Activated CD8-positive, alpha-beta T cell treated with anti-CD3 and anti-CD28 coated beads for 36 hours (primary cell): ENCODE measurements at regions of chr9 and their contacts with region 1.

Region 1: GRCh38 chr9:34646211-34647083 is at the start of gene GALT:
- DNase-seq: peak; percentile 98
- ATAC-seq: peak; percentile 90
- H3K4me3 Mint-ChIP-seq: peak within 1 kb of the TSS; percentile 80
- H3K27ac Mint-ChIP-seq: peak within 1 kb of the TSS; percentile 85
- H3K4me1 Mint-ChIP-seq: peaks cover 22% of the 10 kb centered on the region
- H3K27me3 Mint-ChIP-seq: no peaks in the 10 kb centered on the region
- CTCF ChIP-seq: peak; percentile 61
- total RNA-seq, gene GALT: 42.8 to 44.5 TPM

Region 2: DNA sequence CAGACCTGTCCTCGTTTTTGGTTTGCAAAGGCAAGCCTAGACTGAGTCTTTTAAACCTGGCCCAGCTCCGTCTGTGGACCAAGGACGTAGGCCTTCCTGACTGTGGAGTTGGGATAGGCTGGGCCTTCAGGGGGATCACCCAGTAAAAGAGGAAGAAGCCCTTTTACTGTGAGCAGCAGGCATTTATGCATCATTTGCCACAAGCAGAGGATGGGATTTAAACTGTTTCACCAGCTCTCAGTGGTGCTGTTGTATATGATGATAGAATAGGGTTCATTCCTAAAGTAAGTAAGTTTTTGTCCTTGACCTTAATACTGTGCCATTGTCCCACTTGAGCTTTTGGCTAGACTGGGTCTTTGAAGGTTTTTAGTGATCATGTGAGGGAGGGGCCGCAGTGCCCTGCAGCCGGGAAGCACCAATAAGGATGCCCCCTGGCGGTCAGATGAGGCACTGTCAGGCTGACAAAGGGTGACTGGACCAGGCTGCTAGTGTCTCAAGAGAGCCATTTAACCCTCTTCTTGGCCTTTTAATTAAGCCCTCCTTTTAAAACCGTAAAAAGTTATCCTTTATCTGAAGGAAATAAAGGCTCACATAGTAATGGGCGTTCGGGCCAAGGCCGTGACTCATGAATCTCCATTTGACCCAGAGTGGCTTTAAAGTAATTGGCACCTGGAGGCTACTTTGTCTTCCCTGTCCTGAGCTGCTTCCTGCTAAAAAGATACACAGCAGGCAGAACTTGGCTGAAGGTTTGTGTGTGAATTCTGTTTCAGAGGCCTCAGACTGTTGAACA is 393.6 kb before region 1 on chr9:
- CTCF ChIA-PET with region 1: no interaction called
- POLR2A ChIA-PET with region 1: no interaction called
- intact Hi-C with region 1: no loop called
- DNase-seq: peak; percentile 79
- ATAC-seq: peak; percentile 85
- H3K4me3 Mint-ChIP-seq: no peak overlapping the region
- H3K27ac Mint-ChIP-seq: no peak overlapping the region
- H3K4me1 Mint-ChIP-seq: peaks cover 12% of the 10 kb centered on the region
- H3K27me3 Mint-ChIP-seq: no peaks in the 10 kb centered on the region
- CTCF ChIP-seq: peak; percentile 95

Region 3: DNA sequence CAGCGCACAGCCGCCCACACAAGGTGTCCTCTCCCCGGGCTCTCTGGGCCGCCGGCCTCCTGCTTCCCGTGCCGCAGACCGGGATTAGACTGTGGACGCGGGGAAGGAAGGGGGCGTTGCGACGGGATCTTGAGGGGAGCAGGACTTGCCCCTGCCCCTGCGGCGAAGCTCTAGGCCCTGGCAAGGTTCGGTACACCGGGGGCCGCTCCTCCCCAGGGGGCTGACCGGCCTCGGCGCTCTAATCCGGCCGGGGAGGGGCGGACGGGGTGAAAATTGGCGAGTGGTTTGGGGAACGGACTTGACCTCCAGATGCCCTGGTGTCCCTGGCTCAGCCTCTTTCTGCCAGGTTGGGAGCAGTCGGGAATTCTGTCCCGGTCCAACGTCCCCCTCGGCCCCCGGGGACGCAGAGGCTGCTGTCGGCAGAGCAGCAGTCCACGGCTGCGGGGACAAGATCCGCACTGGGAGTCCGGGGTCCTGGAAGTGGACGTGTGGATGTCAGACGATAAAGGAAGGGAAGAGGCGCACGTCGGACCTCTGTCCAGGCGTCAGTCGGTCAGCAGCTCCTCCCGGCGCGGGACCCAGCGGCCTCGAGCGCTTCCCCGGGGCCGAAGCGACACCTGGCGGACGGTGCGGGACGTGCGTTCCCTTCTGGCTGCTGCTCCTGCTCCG is 55.1 kb before region 1 on chr9:
- CTCF ChIA-PET with region 1: no interaction called
- POLR2A ChIA-PET with region 1: no interaction called
- intact Hi-C with region 1: no loop called
- DNase-seq: peak; percentile 84
- ATAC-seq: peak; percentile 85
- H3K4me3 Mint-ChIP-seq: peak overlapping the region; percentile 53
- H3K27ac Mint-ChIP-seq: no peak overlapping the region
- H3K4me1 Mint-ChIP-seq: peaks cover 23% of the 10 kb centered on the region
- H3K27me3 Mint-ChIP-seq: peaks cover 57% of the 10 kb centered on the region
- CTCF ChIP-seq: peak; percentile 97

Region 4: GRCh38 chr9:34620061-34620994 is 26.1 kb before region 1 on chr9 and contains the start of gene DCTN3:
- CTCF ChIA-PET with region 1: interaction called, 5 read pairs
- POLR2A ChIA-PET with region 1: interaction called, 11 read pairs
- intact Hi-C with region 1: no loop called
- DNase-seq: peak; percentile 97
- ATAC-seq: peak; percentile 99
- H3K4me3 Mint-ChIP-seq: peak within 1 kb of the TSS; percentile 91
- H3K27ac Mint-ChIP-seq: peak within 1 kb of the TSS; percentile 75
- H3K4me1 Mint-ChIP-seq: peaks cover 26% of the 10 kb centered on the region
- H3K27me3 Mint-ChIP-seq: peaks cover 17% of the 10 kb centered on the region
- CTCF ChIP-seq: no peak
- total RNA-seq, gene DCTN3: 52.7 to 61.0 TPM

Region 5: GRCh38 chr9:34659592-34660535 is 13.4 kb after region 1 on chr9:
- CTCF ChIA-PET with region 1: interaction called, 54 read pairs
- POLR2A ChIA-PET with region 1: interaction called, 34 read pairs
- intact Hi-C with region 1: no loop called
- DNase-seq: peak; percentile 26
- ATAC-seq: no peak
- H3K4me3 Mint-ChIP-seq: no peak overlapping the region
- H3K27ac Mint-ChIP-seq: no peak overlapping the region
- H3K4me1 Mint-ChIP-seq: peaks cover 22% of the 10 kb centered on the region
- H3K27me3 Mint-ChIP-seq: no peaks in the 10 kb centered on the region
- CTCF ChIP-seq: no peak

Region 6: DNA sequence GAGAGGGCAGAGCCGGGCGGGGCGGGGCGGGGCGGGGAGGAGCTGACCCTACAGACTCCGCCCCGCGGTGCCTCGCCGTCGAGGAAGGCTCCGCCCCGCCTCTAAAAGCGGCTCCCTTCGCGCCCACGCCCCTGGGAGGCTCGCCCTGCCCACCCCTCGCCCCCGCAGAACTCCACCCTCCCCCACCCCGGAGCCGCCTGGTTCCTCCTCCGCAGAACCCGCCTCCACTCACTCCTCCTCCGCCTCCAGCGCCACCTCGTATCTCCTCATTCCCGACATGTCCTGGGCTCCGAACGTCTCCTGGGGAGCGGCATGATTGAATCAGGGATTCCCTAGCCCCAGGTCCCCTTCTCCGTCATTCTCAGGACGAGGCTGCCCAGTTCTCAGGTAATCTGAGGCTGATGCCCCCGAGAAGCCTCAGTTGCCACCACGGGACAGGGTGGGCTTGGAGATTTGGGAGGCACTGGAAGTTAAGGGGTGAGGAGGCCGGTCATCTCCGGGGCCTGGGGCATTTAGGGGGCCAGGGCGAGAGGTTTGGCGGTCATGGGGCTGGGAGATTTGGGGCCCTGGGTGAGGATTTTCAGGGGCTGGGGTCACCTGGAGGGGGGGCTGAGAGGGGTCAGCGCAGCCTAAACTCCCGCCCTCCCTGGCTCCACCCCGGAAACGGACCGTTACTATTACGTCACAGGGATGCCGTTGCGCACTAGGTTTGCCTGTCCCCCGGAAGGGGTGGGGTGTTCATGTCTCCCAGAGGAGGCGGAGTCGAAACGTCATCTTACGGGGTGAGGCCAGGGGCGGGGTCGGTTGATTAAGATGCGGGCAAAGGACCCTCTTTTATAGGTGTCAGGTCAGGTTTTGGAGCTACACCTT is 19.2 kb after region 1 on chr9:
- CTCF ChIA-PET with region 1: interaction called, 54 read pairs
- POLR2A ChIA-PET with region 1: interaction called, 34 read pairs
- intact Hi-C with region 1: no loop called
- DNase-seq: peak; percentile 91
- ATAC-seq: peak; percentile 81
- H3K4me3 Mint-ChIP-seq: peak overlapping the region; percentile 79
- H3K27ac Mint-ChIP-seq: peak overlapping the region; percentile 85
- H3K4me1 Mint-ChIP-seq: peaks cover 22% of the 10 kb centered on the region
- H3K27me3 Mint-ChIP-seq: no peaks in the 10 kb centered on the region
- CTCF ChIP-seq: no peak

Region 7: GRCh38 chr9:34675869-34676268 is 29.4 kb after region 1 on chr9:
- CTCF ChIA-PET with region 1: no interaction called
- POLR2A ChIA-PET with region 1: no interaction called
- intact Hi-C with region 1: no loop called
- DNase-seq: no peak
- ATAC-seq: no peak
- H3K4me3 Mint-ChIP-seq: no peak overlapping the region
- H3K27ac Mint-ChIP-seq: no peak overlapping the region
- H3K4me1 Mint-ChIP-seq: no peaks in the 10 kb centered on the region
- H3K27me3 Mint-ChIP-seq: no peaks in the 10 kb centered on the region
- CTCF ChIP-seq: no peak